SK-N-SH (cell line): ENCODE measurements at regions of chr7 and their contacts with region 1.

Region 1: GRCh38 chr7:117127585-117128168 is 174.4 kb downstream of the ST7 start:
- DNase-seq: no peak
- H3K4me3 ChIP-seq: no peak overlapping the region
- H3K27ac ChIP-seq: peak overlapping the region in 1 of 2 experiments; percentile 94; a peak in 1 of 4 replicates
- H3K4me1 ChIP-seq: peaks cover 23 to 46% of the 10 kb centered on the region in 2 experiments
- H3K27me3 ChIP-seq: no peaks in the 10 kb centered on the region
- CTCF ChIP-seq: peak; percentile 98
- EP300 ChIP-seq: no peak
- RAD21 ChIP-seq: peak; percentile 84

Region 2: DNA sequence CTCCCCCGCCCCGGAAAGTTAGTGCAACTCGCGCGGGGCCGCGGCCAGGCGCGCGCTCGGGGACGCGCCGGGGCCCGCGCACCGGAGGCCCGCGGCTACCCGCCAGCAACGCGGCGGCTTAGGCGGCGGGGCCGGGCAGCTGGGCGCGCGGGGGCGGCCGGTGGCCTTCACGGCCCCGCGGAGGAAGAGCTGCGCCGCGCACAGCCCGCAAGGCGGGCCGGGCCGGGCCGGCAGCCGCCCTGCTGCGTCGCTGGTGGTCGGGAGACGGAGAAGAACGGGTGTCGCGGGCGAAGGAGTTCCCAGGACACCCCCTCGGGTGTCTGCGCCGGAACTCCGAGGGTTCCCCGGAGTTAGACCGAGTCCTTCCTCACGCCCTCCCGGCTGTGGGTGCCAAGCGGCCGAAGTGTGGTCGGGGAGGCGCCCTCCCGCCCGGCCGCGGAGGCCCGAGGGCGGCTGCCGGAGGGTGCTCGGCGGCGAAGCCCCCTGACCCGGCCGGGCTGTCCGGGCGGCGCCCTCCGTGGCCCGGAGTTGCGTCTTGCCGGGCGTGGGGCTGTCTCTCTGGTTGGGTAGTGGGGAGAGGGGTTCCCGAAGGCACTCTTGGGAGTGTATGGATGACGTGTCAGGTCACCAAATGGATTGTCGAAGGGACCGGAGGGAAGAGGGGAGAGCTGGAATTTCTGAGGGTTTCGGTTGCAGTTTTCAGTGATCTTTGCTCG is 173.8 kb before region 1 on chr7:
- CTCF ChIA-PET with region 1: interaction called, 14 read pairs
- POLR2A ChIA-PET with region 1: no interaction called
- DNase-seq: peak; percentile 92
- H3K4me3 ChIP-seq: peak overlapping the region; percentile 85 to 91
- H3K27ac ChIP-seq: peak overlapping the region; percentile 97
- H3K4me1 ChIP-seq: peaks cover 19 to 23% of the 10 kb centered on the region in 2 experiments; a peak in 3 of 4 replicates
- H3K27me3 ChIP-seq: no peaks in the 10 kb centered on the region
- CTCF ChIP-seq: no peak; the same call in 1 of the 2 replicates
- EP300 ChIP-seq: peak in 1 of 2 experiments; percentile 28; a peak in 1 of 4 replicates
- RAD21 ChIP-seq: no peak

Region 3: DNA sequence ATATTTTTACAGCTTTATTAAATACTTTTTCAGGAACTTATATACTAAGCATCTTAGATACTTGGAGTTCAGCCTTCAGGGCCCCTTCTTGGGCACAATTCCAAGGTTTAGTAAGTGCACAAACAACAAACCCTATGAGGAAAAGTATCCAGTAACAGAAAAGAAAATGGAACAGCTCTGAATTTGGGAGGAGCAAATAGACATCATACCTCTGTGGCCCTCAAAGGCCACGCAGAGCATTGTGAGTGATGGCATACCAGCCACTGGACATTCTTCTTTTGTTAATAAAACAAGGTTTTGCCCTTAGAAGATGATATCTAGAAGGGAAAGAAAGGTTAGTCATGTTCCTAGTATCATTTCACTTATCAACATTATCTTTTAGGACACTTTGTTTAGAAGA is 128.4 kb before region 1 on chr7:
- CTCF ChIA-PET with region 1: interaction called, 12 read pairs
- POLR2A ChIA-PET with region 1: no interaction called
- DNase-seq: no peak
- H3K4me3 ChIP-seq: no peak overlapping the region
- H3K27ac ChIP-seq: peak overlapping the region in 1 of 2 experiments; percentile 14; a peak in 2 of 4 replicates
- H3K4me1 ChIP-seq: no peaks in the 10 kb centered on the region
- H3K27me3 ChIP-seq: no peaks in the 10 kb centered on the region
- CTCF ChIP-seq: no peak
- EP300 ChIP-seq: peak in 1 of 2 experiments; percentile 14; a peak in 1 of 4 replicates
- RAD21 ChIP-seq: no peak

Region 4: GRCh38 chr7:117019786-117020590 is 107.7 kb before region 1 on chr7:
- CTCF ChIA-PET with region 1: interaction called, 32 read pairs
- POLR2A ChIA-PET with region 1: no interaction called
- DNase-seq: peak; percentile 78
- H3K4me3 ChIP-seq: peak overlapping the region; percentile 48 to 53
- H3K27ac ChIP-seq: peak overlapping the region; percentile 84 to 86
- H3K4me1 ChIP-seq: peaks cover 10 to 39% of the 10 kb centered on the region in 2 experiments; a peak in 3 of 4 replicates
- H3K27me3 ChIP-seq: no peaks in the 10 kb centered on the region
- CTCF ChIP-seq: no peak
- EP300 ChIP-seq: peak in 1 of 2 experiments; percentile 45; a peak in 1 of 4 replicates
- RAD21 ChIP-seq: 0 out of 2 replicates have a peak, but pooled peaks have one; percentile 18

Region 5: GRCh38 chr7:117385340-117386109 is 257.8 kb after region 1 on chr7:
- CTCF ChIA-PET with region 1: interaction called, 18 read pairs
- POLR2A ChIA-PET with region 1: no interaction called
- DNase-seq: peak; percentile 5
- H3K4me3 ChIP-seq: no peak overlapping the region
- H3K27ac ChIP-seq: no peak overlapping the region
- H3K4me1 ChIP-seq: no peaks in the 10 kb centered on the region; a peak in 1 of 4 replicates
- H3K27me3 ChIP-seq: peaks cover 7% of the 10 kb centered on the region; the same call in 1 of the 2 replicates
- CTCF ChIP-seq: peak; percentile 79
- EP300 ChIP-seq: no peak
- RAD21 ChIP-seq: peak; percentile 76